T-cell (primary cell): ENCODE measurements at regions of chr10 and their contacts with region 1.

Region 1: GRCh38 chr10:14185316-14186045 is 145.2 kb downstream of the FRMD4A start:
- DNase-seq: peak in 33 of 35 experiments; percentile 15 to 81 (median 43)
- ATAC-seq: peak; percentile 65 to 82 (median 68)
- H3K4me3 ChIP-seq: peak overlapping the region; percentile 3 to 21
- H3K4me3 Mint-ChIP-seq: peak overlapping the region; percentile 48 to 78 (median 70)
- H3K27ac ChIP-seq: peak overlapping the region; percentile 80
- H3K27ac Mint-ChIP-seq: peak overlapping the region; percentile 87 to 93
- H3K4me1 ChIP-seq: peaks cover 15 to 24% of the 10 kb centered on the region in 2 experiments
- H3K4me1 Mint-ChIP-seq: peaks cover 22 to 27% (median 23%) of the 10 kb centered on the region in 3 donors
- H3K27me3 ChIP-seq: peaks cover 2 to 26% of the 10 kb centered on the region in 2 experiments
- H3K27me3 Mint-ChIP-seq: peaks cover 21 to 22% of the 10 kb centered on the region in 2 donors

Region 2: DNA sequence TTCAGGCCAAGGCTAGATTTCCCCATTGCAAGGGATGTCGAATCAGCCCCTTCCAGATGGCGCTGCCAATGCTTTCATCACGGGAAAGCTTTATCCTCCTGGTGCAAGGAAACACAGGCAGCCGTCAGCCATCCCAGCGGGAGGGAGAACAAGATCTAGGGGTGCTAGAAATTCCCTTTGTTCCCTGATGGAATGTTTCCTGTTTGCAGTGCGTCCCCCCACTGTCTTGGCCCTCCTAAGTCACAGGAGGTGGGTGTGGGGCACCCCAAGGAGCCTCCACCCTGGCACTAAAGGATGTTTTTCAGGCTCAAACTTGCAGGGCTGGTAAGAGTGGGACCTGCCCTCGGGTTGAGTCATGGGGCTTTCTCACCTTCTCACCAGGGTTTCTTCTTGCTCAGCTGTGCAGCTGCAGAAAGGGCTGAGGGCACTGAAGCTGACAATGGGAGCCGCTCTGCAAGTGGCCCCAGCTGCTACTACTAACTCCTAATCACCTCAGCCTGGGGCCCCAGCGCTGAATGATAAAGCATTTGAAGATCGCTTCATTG is 495.1 kb before region 1 on chr10:
- CTCF ChIA-PET with region 1: no interaction called
- POLR2A ChIA-PET with region 1: no interaction called
- DNase-seq: no peak
- ATAC-seq: no peak
- H3K4me3 ChIP-seq: no peak overlapping the region
- H3K4me3 Mint-ChIP-seq: no peak overlapping the region
- H3K27ac ChIP-seq: no peak overlapping the region
- H3K27ac Mint-ChIP-seq: no peak overlapping the region
- H3K4me1 ChIP-seq: no peaks in the 10 kb centered on the region
- H3K4me1 Mint-ChIP-seq: no peaks in the 10 kb centered on the region
- H3K27me3 ChIP-seq: no peaks in the 10 kb centered on the region
- H3K27me3 Mint-ChIP-seq: no peaks in the 10 kb centered on the region

Region 3: DNA sequence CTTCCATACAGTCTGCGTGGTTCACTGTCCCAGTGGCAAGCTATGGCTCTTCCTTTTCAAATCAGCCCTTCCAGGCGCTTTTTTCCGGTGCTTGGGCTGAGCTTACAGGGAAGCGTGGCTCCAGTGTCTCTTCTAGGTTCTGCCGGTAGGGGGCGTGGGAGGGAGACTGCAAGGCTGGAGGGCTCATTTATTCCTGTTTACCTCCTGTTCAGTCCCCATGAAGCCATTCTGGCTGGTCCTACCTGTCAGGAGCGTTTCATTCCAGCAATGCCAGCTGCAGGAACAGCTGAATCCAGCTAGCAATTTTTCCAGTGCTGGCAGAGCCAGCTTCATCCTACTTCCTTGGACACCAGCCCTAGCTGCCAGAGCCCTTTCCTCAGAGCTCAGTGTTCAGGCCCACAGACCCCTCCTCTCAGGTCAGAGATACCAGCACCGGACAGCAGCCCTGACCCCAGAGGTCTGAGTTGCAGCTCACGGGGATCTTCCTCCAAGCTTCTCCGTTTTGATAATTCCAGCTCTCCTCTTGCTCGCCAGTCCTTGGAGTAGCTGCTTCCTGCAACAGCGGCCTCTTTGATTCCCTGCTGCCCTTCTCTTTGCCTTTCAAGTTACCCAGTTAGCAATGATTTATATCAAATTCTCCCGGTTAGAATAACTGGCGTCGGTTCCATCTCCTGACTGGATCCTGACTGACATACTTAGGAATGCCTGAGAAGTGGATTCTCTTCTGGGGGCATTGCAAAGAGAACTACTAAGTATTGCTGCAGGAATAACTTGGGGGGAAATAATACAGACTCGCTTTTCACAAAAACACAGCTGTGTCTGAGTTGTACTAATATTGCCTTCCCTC is 15.4 kb after region 1 on chr10:
- CTCF ChIA-PET with region 1: interaction called, 4 to 12 read pairs
- POLR2A ChIA-PET with region 1: interaction called in 1 of 2 experiments, 3 read pairs
- DNase-seq: no peak
- ATAC-seq: no peak
- H3K4me3 ChIP-seq: no peak overlapping the region
- H3K4me3 Mint-ChIP-seq: no peak overlapping the region
- H3K27ac ChIP-seq: no peak overlapping the region
- H3K27ac Mint-ChIP-seq: no peak overlapping the region
- H3K4me1 ChIP-seq: no peaks in the 10 kb centered on the region
- H3K4me1 Mint-ChIP-seq: no peaks in the 10 kb centered on the region
- H3K27me3 ChIP-seq: peaks cover 0 to 26% of the 10 kb centered on the region in 2 experiments
- H3K27me3 Mint-ChIP-seq: peaks cover 25 to 26% of the 10 kb centered on the region in 2 donors